ENCODE measurements at regions of chr12 and their contacts with region 1.

Region 1: GRCh38 chr12:46303039-46303666 is 34.3 kb upstream of the SLC38A1 start:
- DNase-seq: no peak
- H3K4me3 ChIP-seq: no peak overlapping the region
- H3K27ac ChIP-seq: no peak overlapping the region
- H3K4me1 ChIP-seq: peaks cover 0 to 18% (median 5%) of the 10 kb centered on the region in 4 experiments; a peak in 2 of 7 replicates
- H3K27me3 ChIP-seq: no peaks in the 10 kb centered on the region
- CTCF ChIP-seq: peak; percentile 13 to 76 (median 41)
- EP300 ChIP-seq: no peak
- POLR2A ChIP-seq: no peak
- RAD21 ChIP-seq: peak; percentile 41 to 61

Region 2: GRCh38 chr12:46181465-46181864 is 121.7 kb before region 1 on chr12:
- CTCF ChIA-PET with region 1: no interaction called
- POLR2A ChIA-PET with region 1: no interaction called
- DNase-seq: no peak
- H3K4me3 ChIP-seq: no peak overlapping the region
- H3K27ac ChIP-seq: no peak overlapping the region
- H3K4me1 ChIP-seq: no peaks in the 10 kb centered on the region; a peak in 1 of 7 replicates
- H3K27me3 ChIP-seq: no peaks in the 10 kb centered on the region
- CTCF ChIP-seq: no peak
- EP300 ChIP-seq: no peak
- POLR2A ChIP-seq: 0 out of 3 replicates have a peak, but pooled peaks of 1 of the 2 experiments have one; percentile 17
- RAD21 ChIP-seq: no peak

Region 3: DNA sequence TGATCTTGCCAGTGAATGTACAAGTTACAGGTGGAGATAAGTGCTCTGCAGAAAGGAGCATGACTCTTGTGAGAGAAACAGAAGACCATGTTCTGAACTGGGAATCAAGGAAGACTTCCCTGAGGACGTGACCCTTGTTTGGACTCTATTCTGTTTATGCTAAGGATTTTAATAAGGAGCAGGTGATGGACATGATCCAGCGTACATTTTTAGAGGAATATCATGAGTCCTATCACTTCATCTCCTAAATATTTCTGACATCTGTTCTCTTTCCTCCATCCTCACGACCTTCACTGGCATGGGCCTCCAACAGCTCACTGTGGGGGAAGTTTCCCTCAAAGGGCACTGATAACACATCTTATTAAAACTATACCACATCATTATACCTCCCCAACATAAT is 26.4 kb before region 1 on chr12:
- CTCF ChIA-PET with region 1: interaction called, 11 read pairs
- POLR2A ChIA-PET with region 1: no interaction called
- DNase-seq: no peak
- H3K4me3 ChIP-seq: no peak overlapping the region
- H3K27ac ChIP-seq: no peak overlapping the region
- H3K4me1 ChIP-seq: no peaks in the 10 kb centered on the region; a peak in 1 of 7 replicates
- H3K27me3 ChIP-seq: no peaks in the 10 kb centered on the region
- CTCF ChIP-seq: no peak
- EP300 ChIP-seq: no peak
- POLR2A ChIP-seq: no peak
- RAD21 ChIP-seq: no peak

Region 4: GRCh38 chr12:46318037-46318436 is 14.9 kb after region 1 on chr12:
- CTCF ChIA-PET with region 1: interaction called, 10 read pairs
- POLR2A ChIA-PET with region 1: no interaction called
- DNase-seq: no peak
- H3K4me3 ChIP-seq: no peak overlapping the region
- H3K27ac ChIP-seq: no peak overlapping the region
- H3K4me1 ChIP-seq: peaks cover 2 to 11% (median 3%) of the 10 kb centered on the region in 4 experiments; a peak in 6 of 7 replicates
- H3K27me3 ChIP-seq: no peaks in the 10 kb centered on the region
- CTCF ChIP-seq: no peak
- EP300 ChIP-seq: no peak
- POLR2A ChIP-seq: no peak
- RAD21 ChIP-seq: no peak

Region 5: GRCh38 chr12:46468159-46468558 is 165.0 kb after region 1 on chr12:
- CTCF ChIA-PET with region 1: no interaction called
- POLR2A ChIA-PET with region 1: no interaction called
- DNase-seq: no peak
- H3K4me3 ChIP-seq: no peak overlapping the region
- H3K27ac ChIP-seq: no peak overlapping the region
- H3K4me1 ChIP-seq: peaks cover 0 to 3% (median 0%) of the 10 kb centered on the region in 4 experiments; a peak in 3 of 7 replicates
- H3K27me3 ChIP-seq: no peaks in the 10 kb centered on the region
- CTCF ChIP-seq: peak in 1 of 3 experiments; percentile 17; a peak in 1 of 4 replicates
- EP300 ChIP-seq: no peak
- POLR2A ChIP-seq: no peak
- RAD21 ChIP-seq: no peak

Measured in H1 (cell line).